ENCODE measurements at regions of chr22 and their contacts with region 1.

Region 1: GRCh38 chr22:36757668-36758211 is 18.2 kb downstream of the IFT27 start:
- DNase-seq: peak; percentile 66
- ATAC-seq: peak; percentile 81
- H3K4me3 Mint-ChIP-seq: no peak overlapping the region
- H3K27ac Mint-ChIP-seq: no peak overlapping the region
- H3K4me1 Mint-ChIP-seq: no peaks in the 10 kb centered on the region
- H3K27me3 Mint-ChIP-seq: peaks cover 16% of the 10 kb centered on the region
- CTCF ChIP-seq: peak; percentile 41

Region 2: GRCh38 chr22:36520423-36520822 is 237.3 kb before region 1 on chr22:
- CTCF ChIA-PET with region 1: no interaction called
- POLR2A ChIA-PET with region 1: no interaction called
- intact Hi-C with region 1: no loop called
- DNase-seq: no peak
- ATAC-seq: no peak
- H3K4me3 Mint-ChIP-seq: no peak overlapping the region
- H3K27ac Mint-ChIP-seq: no peak overlapping the region
- H3K4me1 Mint-ChIP-seq: peaks cover 7% of the 10 kb centered on the region
- H3K27me3 Mint-ChIP-seq: no peaks in the 10 kb centered on the region
- CTCF ChIP-seq: no peak

Region 3: GRCh38 chr22:36737776-36738175 is 20.0 kb before region 1 on chr22:
- CTCF ChIA-PET with region 1: no interaction called
- POLR2A ChIA-PET with region 1: no interaction called
- intact Hi-C with region 1: no loop called
- DNase-seq: no peak
- ATAC-seq: no peak
- H3K4me3 Mint-ChIP-seq: no peak overlapping the region
- H3K27ac Mint-ChIP-seq: no peak overlapping the region
- H3K4me1 Mint-ChIP-seq: no peaks in the 10 kb centered on the region
- H3K27me3 Mint-ChIP-seq: peaks cover 39% of the 10 kb centered on the region
- CTCF ChIP-seq: no peak

Region 4: GRCh38 chr22:36775964-36776669 is 18.4 kb after region 1 on chr22 and contains the start of gene IFT27:
- CTCF ChIA-PET with region 1: interaction called, 25 read pairs
- POLR2A ChIA-PET with region 1: interaction called, 9 read pairs
- intact Hi-C with region 1: loop called (anchors 1 kb)
- DNase-seq: peak; percentile 81
- ATAC-seq: peak; percentile 89
- H3K4me3 Mint-ChIP-seq: peak within 1 kb of the TSS; percentile 88
- H3K27ac Mint-ChIP-seq: peak within 1 kb of the TSS; percentile 89
- H3K4me1 Mint-ChIP-seq: peaks cover 14% of the 10 kb centered on the region
- H3K27me3 Mint-ChIP-seq: no peaks in the 10 kb centered on the region
- CTCF ChIP-seq: no peak
- total RNA-seq, gene IFT27: 26.2 and 32.7 TPM in 2 replicates

Region 5: GRCh38 chr22:36901411-36902142 is 143.8 kb after region 1 on chr22:
- CTCF ChIA-PET with region 1: no interaction called
- POLR2A ChIA-PET with region 1: interaction called, 10 read pairs
- intact Hi-C with region 1: no loop called
- DNase-seq: no peak
- ATAC-seq: peak; percentile 78
- H3K4me3 Mint-ChIP-seq: no peak overlapping the region
- H3K27ac Mint-ChIP-seq: peak overlapping the region; percentile 73
- H3K4me1 Mint-ChIP-seq: peaks cover 11% of the 10 kb centered on the region
- H3K27me3 Mint-ChIP-seq: peaks cover 4% of the 10 kb centered on the region
- CTCF ChIP-seq: no peak

Region 6: GRCh38 chr22:37043828-37044538 is 286.2 kb after region 1 on chr22:
- CTCF ChIA-PET with region 1: interaction called, 9 read pairs
- POLR2A ChIA-PET with region 1: no interaction called
- intact Hi-C with region 1: loop called (anchors 1 kb)
- DNase-seq: peak; percentile 52
- ATAC-seq: peak; percentile 97
- H3K4me3 Mint-ChIP-seq: no peak overlapping the region
- H3K27ac Mint-ChIP-seq: no peak overlapping the region
- H3K4me1 Mint-ChIP-seq: peaks cover 12% of the 10 kb centered on the region
- H3K27me3 Mint-ChIP-seq: peaks cover 14% of the 10 kb centered on the region
- CTCF ChIP-seq: peak; percentile 41

Region 7: GRCh38 chr22:38021206-38021605 is 1263.5 kb after region 1 on chr22:
- CTCF ChIA-PET with region 1: no interaction called
- POLR2A ChIA-PET with region 1: interaction called, 11 read pairs
- intact Hi-C with region 1: no loop called
- DNase-seq: no peak
- ATAC-seq: no peak
- H3K4me3 Mint-ChIP-seq: no peak overlapping the region
- H3K27ac Mint-ChIP-seq: no peak overlapping the region
- H3K4me1 Mint-ChIP-seq: no peaks in the 10 kb centered on the region
- H3K27me3 Mint-ChIP-seq: peaks cover 3% of the 10 kb centered on the region
- CTCF ChIP-seq: no peak